Gastrocnemius medialis (tissue), 4 donors: ENCODE measurements at regions of chr9 and their contacts with region 1.

Region 1: GRCh38 chr9:137605121-137606004 is at the start of gene ARRDC1:
- DNase-seq: peak; percentile 88 to 93
- ATAC-seq: peak; percentile 75 to 76
- H3K4me3 ChIP-seq: peak within 1 kb of the TSS; percentile 68 to 92 (median 72)
- H3K27ac ChIP-seq: peak within 1 kb of the TSS; percentile 70 to 95 (median 90)
- H3K4me1 ChIP-seq: peaks cover 15 to 22% of the 10 kb centered on the region in 2 donors
- H3K27me3 ChIP-seq: no peaks in the 10 kb centered on the region
- CTCF ChIP-seq: no peak
- POLR2A ChIP-seq: peak; percentile 70 to 74
- total RNA-seq, gene ARRDC1: 20.5 to 23.7 (median 23.3) TPM

Region 2: DNA sequence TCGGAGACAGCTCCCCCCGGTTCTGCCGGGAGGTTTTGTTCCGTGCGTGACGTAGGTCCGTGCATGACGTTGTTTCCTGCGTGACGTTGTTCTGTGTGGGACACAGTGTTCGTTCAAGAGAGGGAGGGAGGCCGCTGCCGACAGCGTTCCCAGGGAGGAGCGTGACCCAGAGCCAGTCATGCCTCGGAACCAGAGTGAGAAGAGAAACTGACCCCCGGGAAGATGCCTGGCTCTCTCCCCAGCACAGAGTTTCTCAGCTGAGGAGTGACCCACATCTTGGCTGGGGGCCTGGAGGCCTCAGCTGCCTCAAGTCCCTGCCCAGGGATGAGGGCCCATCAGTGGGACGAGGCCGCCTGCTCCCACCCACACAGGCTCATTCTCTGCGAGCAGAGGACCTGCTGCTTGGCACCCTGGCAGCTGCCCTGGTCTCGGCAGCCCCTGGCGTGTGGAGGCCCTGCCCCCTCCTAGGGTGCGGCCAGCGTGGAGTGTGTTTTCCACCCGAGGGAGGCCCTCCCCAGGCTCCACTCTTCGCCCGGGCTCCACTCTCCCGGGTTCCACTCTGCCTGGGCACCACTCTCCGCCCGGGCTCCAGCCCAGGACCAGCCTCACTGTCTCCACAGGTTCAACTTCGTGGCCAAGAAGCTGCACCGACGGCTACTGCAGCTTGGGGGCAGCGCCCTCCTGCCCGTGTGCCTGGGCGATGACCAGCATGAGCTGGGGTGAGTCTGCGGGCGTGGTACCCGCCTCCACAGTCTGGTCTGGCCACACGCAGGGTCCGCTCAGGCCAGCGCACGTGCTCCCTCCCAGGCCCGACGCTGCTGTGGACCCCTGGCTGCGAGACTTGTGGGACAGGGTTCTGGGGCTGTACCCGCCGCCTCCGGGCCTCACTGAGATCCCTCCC is 392.0 kb before region 1 on chr9:
- in situ Hi-C with region 1: no loop called
- intact Hi-C with region 1: no loop called
- DNase-seq: no peak
- ATAC-seq: no peak
- H3K4me3 ChIP-seq: no peak overlapping the region
- H3K27ac ChIP-seq: no peak overlapping the region
- H3K4me1 ChIP-seq: peaks cover 9 to 12% of the 10 kb centered on the region in 2 donors
- H3K27me3 ChIP-seq: no peaks in the 10 kb centered on the region
- CTCF ChIP-seq: no peak
- POLR2A ChIP-seq: no peak

Region 3: GRCh38 chr9:137453643-137454081 is 151.7 kb before region 1 on chr9:
- in situ Hi-C with region 1: no loop called
- intact Hi-C with region 1: no loop called
- DNase-seq: peak; percentile 50 to 64
- ATAC-seq: peak; percentile 51 to 57
- H3K4me3 ChIP-seq: peak overlapping the region in 3 of 4 donors; percentile 25 to 34 (median 32)
- H3K27ac ChIP-seq: no peak overlapping the region
- H3K4me1 ChIP-seq: peaks cover 3 to 4% of the 10 kb centered on the region in 2 donors
- H3K27me3 ChIP-seq: no peaks in the 10 kb centered on the region
- CTCF ChIP-seq: no peak
- POLR2A ChIP-seq: no peak

Region 4: DNA sequence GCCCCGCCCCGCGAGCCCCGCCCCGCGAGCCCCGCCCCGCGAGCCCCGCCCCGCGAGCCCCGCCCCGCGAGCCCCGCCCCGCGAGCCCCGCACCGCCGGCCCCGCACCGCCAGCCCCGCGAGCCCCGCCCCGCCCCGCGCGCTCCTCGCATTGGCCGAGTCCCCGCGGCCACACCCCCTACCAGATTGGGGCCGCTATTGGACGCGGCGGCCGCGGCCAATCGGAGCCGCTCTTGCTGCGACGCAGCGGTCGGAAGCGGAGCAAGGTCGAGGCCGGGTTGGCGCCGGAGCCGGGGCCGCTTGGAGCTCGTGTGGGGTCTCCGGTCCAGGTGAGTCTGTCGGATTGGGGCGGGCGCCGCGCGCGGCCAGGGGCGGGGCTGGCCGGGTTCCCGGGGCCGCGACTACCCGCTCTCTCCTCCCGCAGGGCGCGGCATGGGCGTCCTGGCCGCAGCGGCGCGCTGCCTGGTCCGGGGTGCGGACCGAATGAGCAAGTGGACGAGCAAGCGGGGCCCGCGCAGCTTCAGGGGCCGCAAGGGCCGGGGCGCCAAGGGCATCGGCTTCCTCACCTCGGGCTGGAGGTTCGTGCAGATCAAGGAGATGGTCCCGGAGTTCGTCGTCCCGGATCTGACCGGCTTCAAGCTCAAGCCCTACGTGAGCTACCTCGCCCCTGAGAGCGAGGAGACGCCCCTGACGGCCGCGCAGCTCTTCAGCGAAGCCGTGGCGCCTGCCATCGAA is 53.5 kb before region 1 on chr9 and contains the start of gene MRPL41:
- in situ Hi-C with region 1: no loop called
- intact Hi-C with region 1: loop called (anchors 1 kb)
- DNase-seq: peak; percentile 80 to 89
- ATAC-seq: peak; percentile 63 to 70
- H3K4me3 ChIP-seq: peak within 1 kb of the TSS; percentile 71 to 87 (median 76)
- H3K27ac ChIP-seq: peak within 1 kb of the TSS; percentile 95 to 99 (median 97)
- H3K4me1 ChIP-seq: peaks cover 30 to 36% of the 10 kb centered on the region in 2 donors
- H3K27me3 ChIP-seq: no peaks in the 10 kb centered on the region
- CTCF ChIP-seq: no peak
- POLR2A ChIP-seq: peak; percentile 88 to 96
- total RNA-seq, gene MRPL41: 107 to 137 (median 126) TPM

Region 5: GRCh38 chr9:137578518-137579258 is 26.7 kb before region 1 on chr9 and contains the start of gene DPH7:
- in situ Hi-C with region 1: no loop called
- intact Hi-C with region 1: loop called (anchors 1 kb)
- DNase-seq: peak; percentile 88 to 91
- ATAC-seq: peak; percentile 88 to 93
- H3K4me3 ChIP-seq: peak within 1 kb of the TSS; percentile 70 to 97 (median 84)
- H3K27ac ChIP-seq: peak within 1 kb of the TSS; percentile 72 to 95 (median 84)
- H3K4me1 ChIP-seq: peaks cover 32 to 43% of the 10 kb centered on the region in 2 donors
- H3K27me3 ChIP-seq: no peaks in the 10 kb centered on the region
- CTCF ChIP-seq: peak; percentile 91 to 99 (median 94)
- POLR2A ChIP-seq: peak; percentile 49 to 80
- total RNA-seq, gene DPH7: 10.0 to 25.2 (median 13.6) TPM

Region 6: GRCh38 chr9:137590462-137591383 is 14.6 kb before region 1 on chr9 and contains the start of gene ZMYND19:
- in situ Hi-C with region 1: no loop called
- intact Hi-C with region 1: loop called (anchors 1 kb)
- DNase-seq: peak; percentile 79 to 86
- ATAC-seq: peak; percentile 92 to 95
- H3K4me3 ChIP-seq: peak within 1 kb of the TSS; percentile 67 to 99 (median 81)
- H3K27ac ChIP-seq: peak within 1 kb of the TSS; percentile 29 to 64 (median 59)
- H3K4me1 ChIP-seq: peaks cover 7 to 12% of the 10 kb centered on the region in 2 donors
- H3K27me3 ChIP-seq: no peaks in the 10 kb centered on the region
- CTCF ChIP-seq: no peak
- POLR2A ChIP-seq: no peak
- total RNA-seq, gene ZMYND19: 5.8 to 15.2 (median 11.8) TPM

Region 7: DNA sequence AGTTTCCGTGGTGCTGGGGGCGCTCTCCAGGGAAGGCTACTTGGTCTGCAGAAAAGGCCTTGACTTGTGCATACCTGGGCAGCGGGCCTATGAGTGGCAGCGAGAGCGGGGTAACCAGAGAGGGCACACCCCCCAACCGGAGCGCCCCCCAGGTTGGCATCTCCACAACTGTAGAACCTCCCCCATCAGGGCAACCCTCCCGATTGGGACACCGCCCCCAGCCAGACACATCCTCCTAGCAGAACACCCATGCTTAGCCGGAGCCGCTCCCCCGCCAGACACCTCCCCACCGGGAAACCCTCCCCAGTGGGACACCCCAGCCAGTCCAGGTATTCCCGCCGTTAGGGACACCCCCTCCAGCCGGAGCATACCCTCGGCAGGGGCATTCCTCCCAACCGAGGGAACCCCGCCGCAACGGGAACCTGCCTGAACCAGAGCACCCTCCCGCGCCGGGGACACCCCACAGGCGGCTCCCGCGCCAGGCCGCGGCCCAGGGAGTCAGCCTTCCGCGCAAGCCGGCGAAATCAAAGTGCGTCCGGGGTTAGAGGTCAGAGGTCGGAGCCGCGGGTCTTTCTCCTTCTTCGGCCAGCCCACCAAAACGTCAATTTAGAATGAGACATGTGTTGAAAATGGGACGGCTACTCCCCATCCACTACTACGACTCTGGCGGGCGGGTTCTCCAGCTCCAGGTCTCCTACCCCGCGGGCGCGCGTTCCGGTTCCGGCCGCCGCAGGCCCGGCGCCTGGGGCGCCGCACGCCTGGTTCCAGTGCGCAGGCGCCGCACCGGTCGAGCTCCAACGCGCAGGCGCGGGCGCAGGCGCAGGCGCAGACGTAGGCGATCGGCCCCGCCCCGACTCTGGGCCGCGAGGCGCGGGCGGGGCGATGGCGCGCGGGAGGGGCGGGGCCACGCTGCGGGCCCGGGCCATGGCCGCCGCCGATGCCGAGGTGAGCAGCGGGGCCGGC is 13.0 kb after region 1 on chr9 and contains the start of gene EHMT1:
- in situ Hi-C with region 1: no loop called
- intact Hi-C with region 1: loop called (anchors 1 kb)
- DNase-seq: peak; percentile 66 to 82
- ATAC-seq: peak; percentile 88 to 91
- H3K4me3 ChIP-seq: peak within 1 kb of the TSS; percentile 77 to 100 (median 96)
- H3K27ac ChIP-seq: peak within 1 kb of the TSS; percentile 90 to 99 (median 92)
- H3K4me1 ChIP-seq: peaks cover 39 to 41% of the 10 kb centered on the region in 2 donors
- H3K27me3 ChIP-seq: no peaks in the 10 kb centered on the region
- CTCF ChIP-seq: peak in 2 of 5 experiments; percentile 12 to 17
- POLR2A ChIP-seq: peak; percentile 72 to 74
- total RNA-seq, gene EHMT1: 38.6 to 77.8 (median 54.3) TPM

Region 8: GRCh38 chr9:137694967-137695879 is 89.9 kb after region 1 on chr9:
- in situ Hi-C with region 1: no loop called
- intact Hi-C with region 1: no loop called
- DNase-seq: peak in 1 of 2 donors; percentile 36
- ATAC-seq: peak; percentile 34 to 72
- H3K4me3 ChIP-seq: no peak overlapping the region
- H3K27ac ChIP-seq: no peak overlapping the region
- H3K4me1 ChIP-seq: peaks cover 19 to 25% of the 10 kb centered on the region in 2 donors
- H3K27me3 ChIP-seq: no peaks in the 10 kb centered on the region
- CTCF ChIP-seq: peak; percentile 33 to 59 (median 52)
- POLR2A ChIP-seq: no peak

Region 9: GRCh38 chr9:137745541-137745991 is 140.2 kb after region 1 on chr9:
- in situ Hi-C with region 1: no loop called
- intact Hi-C with region 1: no loop called
- DNase-seq: peak; percentile 55 to 70
- ATAC-seq: peak; percentile 82 to 91
- H3K4me3 ChIP-seq: no peak overlapping the region
- H3K27ac ChIP-seq: peak overlapping the region; percentile 42 to 86 (median 74)
- H3K4me1 ChIP-seq: peaks cover 12 to 25% of the 10 kb centered on the region in 2 donors
- H3K27me3 ChIP-seq: no peaks in the 10 kb centered on the region
- CTCF ChIP-seq: no peak
- POLR2A ChIP-seq: no peak